ENCODE measurements at regions of chr17 and their contacts with region 1.

Region 1: GRCh38 chr17:34998205-34998604 is 17.9 kb downstream of the LIG3 start:
- DNase-seq: peak; percentile 78
- ATAC-seq: peak; percentile 97
- H3K4me3 ChIP-seq: no peak overlapping the region
- H3K4me3 Mint-ChIP-seq: no peak overlapping the region
- H3K27ac ChIP-seq: no peak overlapping the region
- H3K27ac Mint-ChIP-seq: peak overlapping the region; percentile 70
- H3K4me1 ChIP-seq: no peaks in the 10 kb centered on the region
- H3K4me1 Mint-ChIP-seq: peaks cover 3% of the 10 kb centered on the region
- H3K27me3 ChIP-seq: no peaks in the 10 kb centered on the region
- H3K27me3 Mint-ChIP-seq: no peaks in the 10 kb centered on the region
- CTCF ChIP-seq: peak; percentile 84

Region 2: GRCh38 chr17:34542700-34543336 is 455.4 kb before region 1 on chr17:
- CTCF ChIA-PET with region 1: no interaction called
- POLR2A ChIA-PET with region 1: no interaction called
- intact Hi-C with region 1: loop called (anchors 5 kb)
- DNase-seq: peak; percentile 65
- ATAC-seq: peak; percentile 45
- H3K4me3 ChIP-seq: no peak overlapping the region
- H3K4me3 Mint-ChIP-seq: no peak overlapping the region
- H3K27ac ChIP-seq: no peak overlapping the region
- H3K27ac Mint-ChIP-seq: no peak overlapping the region
- H3K4me1 ChIP-seq: no peaks in the 10 kb centered on the region
- H3K4me1 Mint-ChIP-seq: no peaks in the 10 kb centered on the region
- H3K27me3 ChIP-seq: peaks cover 0 to 22% (median 10%) of the 10 kb centered on the region in 4 experiments
- H3K27me3 Mint-ChIP-seq: peaks cover 44% of the 10 kb centered on the region
- CTCF ChIP-seq: peak; percentile 92

Region 3: DNA sequence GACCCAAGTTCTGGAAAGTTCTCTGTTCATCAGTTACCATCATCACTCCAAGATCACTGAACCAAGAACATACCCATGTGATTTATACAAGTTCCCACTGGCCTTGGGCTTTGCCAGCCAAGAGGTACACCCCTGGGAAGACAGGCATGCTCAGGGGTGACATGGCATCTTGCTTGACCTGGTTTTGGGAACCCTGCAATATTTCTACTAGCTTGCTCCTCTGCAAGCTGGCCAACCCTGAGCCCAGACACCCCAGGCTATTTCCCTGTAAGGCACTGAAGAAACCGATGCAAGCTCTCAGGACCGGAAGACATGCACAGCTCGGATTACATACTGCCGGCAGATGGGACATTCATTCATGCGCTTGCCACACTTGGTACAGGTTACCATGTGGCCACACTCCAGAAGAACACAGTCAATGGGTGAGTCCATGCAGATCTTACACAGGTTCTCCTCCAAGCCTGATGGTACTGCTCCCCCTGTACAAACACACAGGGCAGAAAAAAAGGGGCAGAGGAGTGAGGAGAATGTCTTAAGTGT is 13.5 kb after region 1 on chr17:
- CTCF ChIA-PET with region 1: interaction called, 11 read pairs
- POLR2A ChIA-PET with region 1: no interaction called
- intact Hi-C with region 1: no loop called
- DNase-seq: no peak
- ATAC-seq: no peak
- H3K4me3 ChIP-seq: no peak overlapping the region
- H3K4me3 Mint-ChIP-seq: no peak overlapping the region
- H3K27ac ChIP-seq: no peak overlapping the region
- H3K27ac Mint-ChIP-seq: peak overlapping the region; percentile 11
- H3K4me1 ChIP-seq: no peaks in the 10 kb centered on the region
- H3K4me1 Mint-ChIP-seq: no peaks in the 10 kb centered on the region
- H3K27me3 ChIP-seq: no peaks in the 10 kb centered on the region
- H3K27me3 Mint-ChIP-seq: no peaks in the 10 kb centered on the region
- CTCF ChIP-seq: no peak

Region 4: DNA sequence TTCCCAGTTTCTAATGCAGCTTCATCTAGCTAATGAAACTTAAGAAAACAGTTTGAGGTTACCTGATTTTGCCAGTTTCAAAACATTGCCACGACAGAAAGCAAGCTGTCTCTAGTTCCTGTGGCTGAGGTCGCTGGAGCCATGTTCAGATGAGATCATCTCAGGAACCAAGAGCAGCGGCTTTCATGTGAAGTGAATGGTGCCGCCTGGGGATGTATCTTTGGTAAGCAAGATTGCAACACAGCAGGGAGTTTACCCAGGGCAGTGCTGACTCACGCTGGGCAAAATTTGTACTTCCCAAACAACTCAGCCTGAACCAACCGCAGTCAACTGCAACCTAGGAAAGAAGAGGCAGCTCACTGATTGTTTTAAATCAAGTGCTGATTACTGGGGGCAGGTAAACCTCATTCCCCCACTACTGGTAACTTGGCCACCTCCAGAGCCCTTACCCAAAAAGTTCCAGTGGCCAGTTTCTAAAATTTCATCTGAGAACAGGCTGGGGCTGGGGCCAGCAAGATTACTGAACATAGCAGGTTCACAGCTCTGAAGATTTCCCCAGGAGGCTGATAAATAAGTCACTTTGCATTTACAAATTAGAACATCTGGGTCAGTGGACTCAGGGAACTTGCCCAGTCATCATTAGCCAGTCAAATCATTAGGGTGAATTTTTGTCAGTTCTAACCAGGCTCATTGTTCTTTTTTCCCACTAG is 65.5 kb after region 1 on chr17 and contains the start of gene RFFL:
- CTCF ChIA-PET with region 1: interaction called, 25 read pairs
- POLR2A ChIA-PET with region 1: no interaction called
- intact Hi-C with region 1: loop called (anchors 1 kb)
- DNase-seq: peak; percentile 82
- ATAC-seq: peak; percentile 97
- H3K4me3 ChIP-seq: peak within 1 kb of the TSS in 3 of 5 experiments; percentile 20 to 38 (median 30)
- H3K4me3 Mint-ChIP-seq: peak within 1 kb of the TSS; percentile 75
- H3K27ac ChIP-seq: peak within 1 kb of the TSS; percentile 42 to 63
- H3K27ac Mint-ChIP-seq: peak within 1 kb of the TSS; percentile 90
- H3K4me1 ChIP-seq: peaks cover 11 to 12% of the 10 kb centered on the region in 2 donors
- H3K4me1 Mint-ChIP-seq: peaks cover 28% of the 10 kb centered on the region
- H3K27me3 ChIP-seq: no peaks in the 10 kb centered on the region
- H3K27me3 Mint-ChIP-seq: no peaks in the 10 kb centered on the region
- CTCF ChIP-seq: no peak
- total RNA-seq, gene RFFL: 36.2 and 36.9 TPM in 2 replicates

Region 5: DNA sequence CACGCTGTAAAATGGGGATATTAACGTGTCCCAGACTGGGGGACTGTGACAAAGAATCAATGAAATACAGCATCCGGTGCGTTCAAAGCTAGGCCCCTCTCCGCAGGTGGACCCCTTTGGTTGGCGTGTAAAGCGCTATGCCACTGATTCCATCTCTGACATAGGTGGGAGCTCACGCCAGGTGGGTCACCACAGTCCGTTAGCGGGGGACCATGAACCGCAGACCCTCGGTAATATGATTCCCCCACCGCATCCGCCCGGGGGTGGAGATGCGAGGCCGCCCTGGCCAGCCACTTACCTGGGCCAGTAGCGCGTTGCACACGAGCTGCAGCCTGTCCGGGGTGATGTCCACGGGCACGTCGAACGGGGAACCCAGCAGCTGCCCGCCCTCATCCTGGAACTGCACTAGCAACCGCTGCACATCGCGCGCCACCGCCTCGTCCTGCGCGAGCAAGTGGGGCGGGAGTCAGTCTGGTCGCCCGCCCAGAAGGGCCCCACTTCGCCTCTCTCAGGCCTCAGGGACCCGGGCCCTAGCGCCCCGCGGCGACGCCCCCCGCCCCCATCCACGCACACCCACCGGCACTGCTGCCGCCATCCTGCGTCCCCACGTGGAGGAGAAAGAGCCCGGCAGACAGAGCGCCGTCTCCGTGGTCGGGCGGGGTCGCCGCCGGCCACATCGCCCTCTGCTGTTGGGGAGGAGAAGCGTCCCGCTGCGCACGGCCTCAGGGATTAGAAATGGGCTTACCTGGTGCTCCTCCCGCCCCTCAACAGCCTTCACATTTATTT is 143.7 kb after region 1 on chr17 and contains the start of gene NLE1:
- CTCF ChIA-PET with region 1: no interaction called
- POLR2A ChIA-PET with region 1: no interaction called
- intact Hi-C with region 1: loop called (anchors 1 kb)
- DNase-seq: peak; percentile 89
- ATAC-seq: peak; percentile 98
- H3K4me3 ChIP-seq: peak within 1 kb of the TSS; percentile 73 to 93 (median 84)
- H3K4me3 Mint-ChIP-seq: peak within 1 kb of the TSS; percentile 87
- H3K27ac ChIP-seq: peak within 1 kb of the TSS in 1 of 2 donors; percentile 64
- H3K27ac Mint-ChIP-seq: peak within 1 kb of the TSS; percentile 56
- H3K4me1 ChIP-seq: peaks cover 5 to 11% of the 10 kb centered on the region in 2 donors
- H3K4me1 Mint-ChIP-seq: peaks cover 20% of the 10 kb centered on the region
- H3K27me3 ChIP-seq: no peaks in the 10 kb centered on the region
- H3K27me3 Mint-ChIP-seq: no peaks in the 10 kb centered on the region
- CTCF ChIP-seq: peak; percentile 95
- total RNA-seq, gene NLE1: 13.7 and 17.5 TPM in 2 replicates